HEK293 (cell line): ENCODE measurements at regions of chr15 and their contacts with region 1.

Region 1: DNA sequence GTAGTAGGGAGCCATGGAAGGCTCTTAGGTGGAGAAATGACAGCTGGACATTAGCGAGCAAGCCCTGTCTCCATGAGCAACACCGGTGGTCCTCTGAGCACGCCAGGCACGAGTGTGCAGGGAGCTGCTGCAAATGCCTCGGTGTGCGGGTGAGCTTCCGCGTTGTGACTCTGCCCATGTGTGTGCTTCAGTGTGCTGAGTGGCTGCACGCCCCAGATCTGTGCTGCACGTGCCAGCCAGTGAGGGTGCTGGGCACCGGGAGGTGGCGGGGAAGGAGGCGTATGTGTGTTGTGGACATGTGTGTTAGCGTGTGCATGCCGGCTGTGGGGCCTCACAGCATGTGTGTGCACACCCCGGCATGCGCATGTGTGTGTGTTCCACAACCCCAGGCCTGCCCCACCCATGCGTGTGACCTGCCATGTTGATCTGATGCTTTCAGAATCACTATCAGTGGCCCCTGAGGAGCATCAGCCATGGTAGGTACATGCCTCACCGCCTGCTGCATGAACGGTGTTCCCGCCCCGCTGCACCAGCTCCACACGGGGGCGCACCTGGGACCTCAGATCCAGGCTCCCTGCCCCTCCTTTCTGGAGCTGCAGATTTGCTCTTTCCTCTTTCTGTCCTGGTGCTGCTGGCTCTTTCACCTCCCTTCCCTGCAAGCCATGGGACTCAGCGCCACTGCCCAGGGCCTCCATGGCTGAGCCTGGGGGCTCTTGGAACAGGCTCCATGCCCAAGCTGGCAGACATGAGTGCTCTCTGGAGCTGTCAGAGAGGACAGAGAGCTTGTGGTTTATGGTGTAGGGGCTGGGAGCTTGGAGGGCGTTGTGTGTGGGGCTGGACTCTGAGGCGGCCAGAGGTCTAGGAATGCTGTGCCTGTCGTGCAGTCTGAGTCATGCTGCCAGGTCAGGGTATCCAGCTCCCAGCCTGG is 169.4 kb downstream of the TBC1D2B start:
- H3K4me3 ChIP-seq: no peak overlapping the region
- H3K27ac ChIP-seq: no peak overlapping the region; the same call in 1 of the 2 replicates
- H3K4me1 ChIP-seq: no peaks in the 10 kb centered on the region
- CTCF ChIP-seq: peak; percentile 66; the same call in 1 of the 2 replicates

Region 2: GRCh38 chr15:77921664-77922063 is 13.6 kb after region 1 on chr15:
- CTCF ChIA-PET with region 1: interaction called, 12 read pairs
- POLR2A ChIA-PET with region 1: no interaction called
- H3K4me3 ChIP-seq: no peak overlapping the region
- H3K27ac ChIP-seq: no peak overlapping the region
- H3K4me1 ChIP-seq: no peaks in the 10 kb centered on the region
- CTCF ChIP-seq: no peak

Region 3: GRCh38 chr15:77944002-77944867 is 36.1 kb after region 1 on chr15:
- CTCF ChIA-PET with region 1: interaction called, 21 read pairs
- POLR2A ChIA-PET with region 1: no interaction called
- H3K4me3 ChIP-seq: peak overlapping the region; percentile 35
- H3K27ac ChIP-seq: peak overlapping the region; percentile 62
- H3K4me1 ChIP-seq: no peaks in the 10 kb centered on the region
- CTCF ChIP-seq: 0 out of 2 replicates have a peak, but pooled peaks have one; percentile 37

Region 4: GRCh38 chr15:77966540-77967290 is 58.6 kb after region 1 on chr15:
- CTCF ChIA-PET with region 1: interaction called, 10 read pairs
- POLR2A ChIA-PET with region 1: no interaction called
- H3K4me3 ChIP-seq: no peak overlapping the region
- H3K27ac ChIP-seq: no peak overlapping the region
- H3K4me1 ChIP-seq: no peaks in the 10 kb centered on the region
- CTCF ChIP-seq: no peak

Region 5: GRCh38 chr15:78422571-78423340 is 514.7 kb after region 1 on chr15:
- CTCF ChIA-PET with region 1: no interaction called
- POLR2A ChIA-PET with region 1: no interaction called
- H3K4me3 ChIP-seq: no peak overlapping the region
- H3K27ac ChIP-seq: no peak overlapping the region
- H3K4me1 ChIP-seq: no peaks in the 10 kb centered on the region
- CTCF ChIP-seq: peak; percentile 54; the same call in 1 of the 2 replicates